ENCODE measurements at regions of chr6 and their contacts with region 1.

Region 1: GRCh38 chr6:27753668-27754407 is 158.4 kb downstream of the OR2B2 start:
- DNase-seq: peak; percentile 84
- H3K4me3 ChIP-seq: peak overlapping the region; percentile 58 to 70 (median 66)
- H3K27ac ChIP-seq: peak overlapping the region in 2 of 4 donors; percentile 12 to 29
- H3K4me1 ChIP-seq: peaks cover 0 to 16% (median 11%) of the 10 kb centered on the region in 4 donors
- H3K27me3 ChIP-seq: peaks cover 5 to 28% (median 23%) of the 10 kb centered on the region in 3 donors
- CTCF ChIP-seq: no peak
- EP300 ChIP-seq: no peak
- POLR2A ChIP-seq: no peak

Region 2: DNA sequence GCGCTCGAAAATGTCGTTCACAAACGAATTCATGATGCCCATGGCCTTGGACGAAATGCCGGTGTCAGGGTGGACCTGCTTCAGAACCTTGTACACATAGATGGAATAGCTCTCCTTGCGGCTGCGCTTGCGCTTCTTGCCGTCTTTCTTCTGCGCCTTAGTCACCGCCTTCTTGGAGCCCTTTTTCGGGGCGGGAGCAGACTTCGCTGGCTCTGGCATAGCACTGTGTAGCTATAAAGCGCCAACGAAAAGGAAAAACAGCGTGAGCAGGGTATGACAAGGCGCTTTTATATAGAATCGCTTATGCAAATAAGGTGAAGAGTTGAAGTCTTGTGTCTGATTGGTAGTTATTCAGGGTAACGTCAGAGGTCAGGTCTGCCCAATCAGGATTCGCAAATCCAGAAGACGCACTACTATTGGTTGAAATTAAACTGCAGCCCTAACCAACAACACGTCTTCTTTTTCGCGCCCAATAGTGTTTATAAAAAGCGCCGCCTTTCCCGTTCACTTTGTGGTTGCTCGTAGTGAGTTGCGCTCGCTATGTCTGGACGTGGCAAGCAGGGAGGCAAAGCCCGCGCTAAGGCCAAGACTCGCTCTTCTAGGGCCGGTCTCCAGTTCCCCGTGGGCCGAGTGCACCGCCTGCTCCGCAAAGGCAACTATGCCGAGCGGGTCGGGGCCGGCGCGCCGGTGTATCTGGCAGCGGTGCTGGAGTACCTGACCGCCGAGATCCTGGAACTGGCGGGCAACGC is 621.1 kb before region 1 on chr6:
- intact Hi-C with region 1: loop called (anchors 2 kb)
- DNase-seq: peak; percentile 96
- H3K4me3 ChIP-seq: peak overlapping the region; percentile 38 to 55 (median 52)
- H3K27ac ChIP-seq: peak overlapping the region; percentile 87 to 95 (median 92)
- H3K4me1 ChIP-seq: peaks cover 0 to 22% (median 11%) of the 10 kb centered on the region in 4 donors
- H3K27me3 ChIP-seq: no peaks in the 10 kb centered on the region
- CTCF ChIP-seq: no peak
- EP300 ChIP-seq: no peak
- POLR2A ChIP-seq: peak; percentile 93 to 95

Region 3: GRCh38 chr6:27374824-27375612 is 378.8 kb before region 1 on chr6:
- intact Hi-C with region 1: loop called (anchors 10 kb)
- DNase-seq: peak; percentile 91
- H3K4me3 ChIP-seq: peak overlapping the region; percentile 61 to 80 (median 72)
- H3K27ac ChIP-seq: peak overlapping the region; percentile 8 to 67 (median 41)
- H3K4me1 ChIP-seq: peaks cover 0 to 12% (median 3%) of the 10 kb centered on the region in 4 donors
- H3K27me3 ChIP-seq: no peaks in the 10 kb centered on the region
- CTCF ChIP-seq: no peak
- EP300 ChIP-seq: no peak
- POLR2A ChIP-seq: no peak

Region 4: GRCh38 chr6:27518881-27519795 is 234.7 kb before region 1 on chr6:
- intact Hi-C with region 1: loop called (anchors 1 kb)
- DNase-seq: peak; percentile 88
- H3K4me3 ChIP-seq: peak overlapping the region; percentile 53 to 80 (median 62)
- H3K27ac ChIP-seq: peak overlapping the region; percentile 86 to 93 (median 89)
- H3K4me1 ChIP-seq: peaks cover 0 to 18% (median 10%) of the 10 kb centered on the region in 4 donors
- H3K27me3 ChIP-seq: peaks cover 0 to 15% (median 0%) of the 10 kb centered on the region in 3 donors
- CTCF ChIP-seq: peak; percentile 25 to 67 (median 62)
- EP300 ChIP-seq: no peak
- POLR2A ChIP-seq: no peak

Region 5: DNA sequence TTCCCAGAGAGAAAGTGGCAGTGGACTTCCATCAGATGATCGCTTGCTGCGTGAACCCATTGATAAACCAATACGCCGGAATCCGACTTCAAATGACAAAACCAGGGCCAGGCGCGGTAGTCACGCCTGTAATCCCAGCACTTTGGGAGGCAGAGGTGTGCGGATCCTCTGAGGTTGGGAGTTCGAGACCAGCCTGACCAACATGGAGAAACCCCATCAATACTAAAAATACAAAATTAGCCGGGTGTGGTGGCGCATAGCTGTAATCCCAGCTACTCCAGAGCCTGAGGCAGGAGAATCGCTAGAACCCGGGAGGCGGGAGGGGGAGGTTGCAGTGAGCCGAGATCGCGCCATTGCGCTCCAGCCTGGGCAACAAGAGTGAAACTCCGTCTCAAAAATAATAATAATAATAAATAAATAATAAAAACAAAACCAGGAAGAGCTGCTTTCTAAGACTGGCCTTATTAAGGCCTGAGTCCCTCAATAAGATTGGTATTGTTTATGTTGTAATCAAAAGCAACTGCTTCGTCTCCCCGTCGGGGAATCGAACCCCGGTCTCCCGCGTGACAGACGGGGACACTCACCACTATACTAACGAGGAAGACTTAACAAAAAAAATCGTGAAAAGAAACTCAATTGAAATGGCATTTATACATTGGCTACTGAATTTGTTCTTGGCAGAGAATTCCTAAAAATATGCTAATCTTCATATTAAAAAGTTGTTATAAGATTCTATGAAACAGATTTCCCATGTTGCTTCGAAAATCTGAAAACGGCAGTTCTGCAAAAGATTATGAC is 170.7 kb before region 1 on chr6:
- intact Hi-C with region 1: no loop called
- DNase-seq: no peak
- H3K4me3 ChIP-seq: no peak overlapping the region
- H3K27ac ChIP-seq: no peak overlapping the region
- H3K4me1 ChIP-seq: no peaks in the 10 kb centered on the region
- H3K27me3 ChIP-seq: peaks cover 12 to 76% (median 30%) of the 10 kb centered on the region in 3 donors
- CTCF ChIP-seq: no peak
- EP300 ChIP-seq: no peak
- POLR2A ChIP-seq: no peak

Region 6: DNA sequence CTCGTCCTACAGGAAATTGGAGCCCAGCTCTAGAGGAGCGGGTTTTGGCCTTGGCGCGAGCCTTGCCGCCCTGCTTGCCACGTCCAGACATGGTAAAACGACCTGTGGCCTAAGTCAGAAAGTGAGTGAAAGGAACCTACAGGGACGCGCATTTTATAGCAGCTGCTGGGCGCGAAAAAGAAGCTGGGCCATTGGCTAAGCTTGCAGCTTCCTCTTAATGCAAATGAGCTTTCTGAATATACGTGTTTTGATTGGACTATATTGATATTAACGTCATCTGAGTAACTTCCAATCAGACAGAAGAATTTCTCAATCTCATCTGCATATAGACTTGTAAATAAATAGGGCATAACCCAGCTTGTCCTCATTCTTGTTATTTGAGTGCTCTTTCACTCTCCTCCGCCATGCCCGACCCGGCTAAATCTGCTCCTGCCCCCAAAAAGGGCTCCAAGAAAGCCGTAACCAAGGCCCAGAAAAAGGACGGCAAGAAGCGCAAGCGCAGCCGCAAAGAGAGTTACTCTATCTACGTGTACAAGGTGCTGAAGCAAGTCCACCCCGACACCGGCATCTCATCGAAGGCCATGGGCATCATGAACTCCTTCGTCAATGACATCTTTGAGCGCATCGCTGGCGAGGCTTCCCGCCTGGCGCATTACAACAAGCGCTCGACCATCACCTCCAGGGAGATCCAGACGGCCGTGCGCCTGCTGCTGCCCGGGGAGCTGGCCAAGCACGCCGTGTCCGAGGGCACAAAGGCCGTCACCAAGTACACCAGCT is 139.4 kb after region 1 on chr6:
- intact Hi-C with region 1: loop called (anchors 2 kb)
- DNase-seq: peak; percentile 81
- H3K4me3 ChIP-seq: peak overlapping the region; percentile 48 to 71 (median 59)
- H3K27ac ChIP-seq: peak overlapping the region in 3 of 4 donors; percentile 33 to 92 (median 59)
- H3K4me1 ChIP-seq: peaks cover 0 to 25% (median 24%) of the 10 kb centered on the region in 4 donors
- H3K27me3 ChIP-seq: peaks cover 22 to 56% (median 47%) of the 10 kb centered on the region in 3 donors
- CTCF ChIP-seq: no peak
- EP300 ChIP-seq: no peak
- POLR2A ChIP-seq: peak in 1 of 2 donors; percentile 84

Measured in sigmoid colon (tissue), 7 donors.